ENCODE measurements at regions of chr22 and their contacts with region 1.

Region 1: GRCh38 chr22:41517172-41518047 is 26.9 kb downstream of the POLR3H start:
- DNase-seq: no peak
- H3K4me3 ChIP-seq: no peak overlapping the region
- CTCF ChIP-seq: peak; percentile 89

Region 2: DNA sequence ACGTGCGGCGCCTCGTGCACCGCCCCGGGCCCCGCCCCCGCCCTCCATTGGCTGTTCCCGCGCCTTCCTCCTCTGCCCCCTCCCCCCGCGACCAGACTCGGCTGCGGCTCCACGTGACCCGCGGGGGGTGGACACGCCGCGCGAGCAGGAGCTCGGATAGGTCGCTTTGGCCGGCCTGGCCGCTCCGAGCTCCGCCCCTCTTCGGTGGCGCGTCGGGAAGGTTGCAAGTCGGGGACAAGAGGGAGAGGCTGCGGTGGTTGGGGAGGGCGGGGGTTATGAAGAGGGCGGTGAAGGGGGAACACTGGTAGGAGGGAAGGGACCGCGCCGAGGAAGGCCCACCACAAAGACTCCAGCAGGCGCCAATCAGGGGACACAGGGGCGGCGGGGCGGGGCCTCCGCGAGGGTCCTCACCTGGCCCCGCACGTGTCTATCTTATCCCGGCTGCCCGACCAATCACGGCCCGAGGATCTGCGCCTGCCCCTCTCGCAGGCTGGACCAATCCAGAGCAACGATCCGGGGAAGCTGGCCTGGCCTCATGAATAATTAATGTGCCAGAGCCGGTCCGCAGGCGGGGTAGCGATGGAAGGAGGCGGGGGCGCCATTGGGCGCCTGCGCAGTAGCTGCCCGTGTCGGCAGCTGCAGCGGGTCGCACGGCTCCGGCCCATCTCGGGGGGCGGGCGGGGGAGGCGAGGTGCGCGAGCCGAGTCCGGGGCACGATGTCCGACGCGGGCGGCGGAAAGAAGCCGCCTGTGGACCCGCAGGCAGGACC is 135.9 kb before region 1 on chr22 and contains the start of gene TEF:
- CTCF ChIA-PET with region 1: interaction called, 23 read pairs
- POLR2A ChIA-PET with region 1: no interaction called
- DNase-seq: peak; percentile 91
- H3K4me3 ChIP-seq: peak within 1 kb of the TSS; percentile 79
- CTCF ChIP-seq: no peak

Region 3: GRCh38 chr22:41448189-41448808 is 69.1 kb before region 1 on chr22:
- CTCF ChIA-PET with region 1: interaction called, 17 read pairs
- POLR2A ChIA-PET with region 1: interaction called, 6 read pairs
- DNase-seq: peak; percentile 96
- H3K4me3 ChIP-seq: peak overlapping the region; percentile 86
- CTCF ChIP-seq: no peak

Region 4: DNA sequence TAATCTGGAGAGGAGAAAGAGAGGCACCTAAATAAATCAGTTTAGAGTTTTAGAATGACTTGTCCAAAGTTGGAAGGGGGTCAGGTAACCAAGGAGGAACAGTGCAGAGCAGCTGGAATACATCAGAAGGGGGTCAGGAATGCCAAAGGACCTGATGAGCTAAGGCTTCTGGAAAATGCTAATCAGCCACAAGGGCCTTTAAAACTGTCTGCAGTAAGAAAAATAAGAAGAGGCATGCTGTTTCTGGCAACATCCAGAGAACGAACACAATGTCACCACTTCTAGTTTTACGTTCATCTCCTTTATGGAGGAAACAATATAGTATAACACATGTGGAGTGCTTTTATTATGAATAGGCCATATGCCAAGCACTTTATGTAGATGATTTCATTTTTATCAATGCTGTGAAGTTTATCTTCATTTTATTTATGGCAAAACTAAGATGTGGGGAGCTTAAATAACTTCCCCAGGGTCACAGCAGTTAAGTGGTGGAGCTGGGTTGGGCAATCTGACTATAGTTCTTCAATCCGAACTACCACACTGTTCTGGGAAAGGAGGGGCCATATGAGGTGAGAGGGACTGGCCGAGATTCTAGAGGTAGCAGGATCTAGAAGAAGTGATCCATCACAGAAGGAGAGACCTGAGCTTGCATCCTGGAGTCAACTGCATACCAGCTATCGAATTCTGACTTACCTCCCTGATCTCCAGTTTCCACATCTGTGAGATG is 25.9 kb before region 1 on chr22:
- CTCF ChIA-PET with region 1: interaction called, 10 read pairs
- POLR2A ChIA-PET with region 1: no interaction called
- DNase-seq: no peak
- H3K4me3 ChIP-seq: no peak overlapping the region
- CTCF ChIP-seq: no peak

Region 5: GRCh38 chr22:41543854-41544670 is 26.7 kb after region 1 on chr22 and contains the start of gene POLR3H:
- CTCF ChIA-PET with region 1: interaction called, 14 read pairs
- POLR2A ChIA-PET with region 1: no interaction called
- DNase-seq: peak; percentile 72
- H3K4me3 ChIP-seq: peak within 1 kb of the TSS; percentile 91
- CTCF ChIP-seq: peak; percentile 78